CD14-positive monocyte (primary cell): ENCODE measurements at regions of chr16 and their contacts with region 1.

Region 1: GRCh38 chr16:106623-107324 is 28.7 kb downstream of the MPG start:
- DNase-seq: peak; percentile 42 to 59 (median 59)
- H3K4me3 ChIP-seq: no peak overlapping the region
- H3K4me3 Mint-ChIP-seq: no peak overlapping the region
- H3K27ac ChIP-seq: no peak overlapping the region
- H3K27ac Mint-ChIP-seq: peak overlapping the region in 1 of 7 donors; percentile 45
- H3K4me1 ChIP-seq: no peaks in the 10 kb centered on the region
- H3K4me1 Mint-ChIP-seq: no peaks in the 10 kb centered on the region
- H3K27me3 ChIP-seq: no peaks in the 10 kb centered on the region
- H3K27me3 Mint-ChIP-seq: peaks cover 0 to 5% (median 0%) of the 10 kb centered on the region in 3 donors
- CTCF ChIP-seq: peak; percentile 84

Region 2: DNA sequence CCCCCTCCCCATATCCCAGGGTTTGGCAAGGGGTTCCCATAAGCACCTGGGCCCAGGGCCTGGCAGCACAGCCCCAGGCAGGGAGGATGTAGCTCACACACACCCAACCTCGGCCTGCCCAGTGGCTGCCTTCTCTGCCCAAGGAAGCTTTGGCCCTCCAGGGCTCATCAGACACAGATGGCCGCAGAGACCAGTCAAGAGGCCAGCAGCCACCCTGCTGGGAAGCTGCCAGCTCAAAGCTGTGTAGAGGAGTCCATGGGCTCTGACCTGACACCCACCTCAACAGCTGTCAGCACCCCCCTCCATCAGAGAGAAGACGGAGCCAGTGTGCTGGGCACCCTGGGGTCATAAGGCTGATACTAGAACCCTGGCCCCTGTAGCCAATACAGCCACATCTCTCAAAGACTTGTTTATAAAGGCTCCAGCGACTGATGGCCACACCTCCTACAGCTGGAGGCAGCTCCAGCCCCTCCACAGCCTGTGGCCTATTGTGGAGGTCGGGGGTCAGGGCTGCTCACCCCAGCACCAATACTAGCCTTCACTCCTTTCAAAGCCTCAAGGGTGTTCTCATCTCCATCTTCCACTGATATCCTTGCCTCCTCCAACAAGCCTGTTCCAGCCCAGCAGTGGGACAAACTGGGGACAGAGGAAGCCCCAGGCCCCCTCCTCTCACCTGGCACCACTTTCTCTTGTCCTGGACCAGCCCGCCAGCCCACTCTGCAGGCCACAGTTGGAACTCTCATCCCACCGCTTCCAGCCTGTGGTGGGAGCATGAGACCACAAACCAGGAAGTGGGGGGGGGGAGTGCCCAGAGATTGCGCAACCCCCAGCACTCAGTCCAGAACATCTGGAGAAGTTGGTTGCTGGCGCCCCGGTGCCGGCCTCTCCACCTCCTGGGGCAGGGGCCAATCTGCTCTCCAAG is 30.9 kb before region 1 on chr16:
- intact Hi-C with region 1: no loop called
- DNase-seq: peak; percentile 46 to 74 (median 71)
- H3K4me3 ChIP-seq: peak overlapping the region in 1 of 3 experiments; percentile 87
- H3K4me3 Mint-ChIP-seq: peak overlapping the region; percentile 49 to 85
- H3K27ac ChIP-seq: no peak overlapping the region
- H3K27ac Mint-ChIP-seq: peak overlapping the region in 3 of 7 donors; percentile 50 to 83 (median 69)
- H3K4me1 ChIP-seq: peaks cover 32 to 40% of the 10 kb centered on the region in 2 donors
- H3K4me1 Mint-ChIP-seq: peaks cover 42% of the 10 kb centered on the region
- H3K27me3 ChIP-seq: peaks cover 13 to 41% of the 10 kb centered on the region in 2 donors
- H3K27me3 Mint-ChIP-seq: peaks cover 37 to 50% (median 39%) of the 10 kb centered on the region in 3 donors
- CTCF ChIP-seq: no peak

Region 3: GRCh38 chr16:164827-165538 is 58.2 kb after region 1 on chr16:
- intact Hi-C with region 1: no loop called
- DNase-seq: no peak
- H3K4me3 ChIP-seq: peak overlapping the region in 1 of 3 experiments; percentile 51
- H3K4me3 Mint-ChIP-seq: peak overlapping the region; percentile 54 to 71
- H3K27ac ChIP-seq: no peak overlapping the region
- H3K27ac Mint-ChIP-seq: peak overlapping the region in 1 of 7 donors; percentile 11
- H3K4me1 ChIP-seq: peaks cover 8 to 16% of the 10 kb centered on the region in 2 donors
- H3K4me1 Mint-ChIP-seq: peaks cover 10% of the 10 kb centered on the region
- H3K27me3 ChIP-seq: peaks cover 33 to 59% of the 10 kb centered on the region in 2 donors
- H3K27me3 Mint-ChIP-seq: peaks cover 61 to 78% (median 69%) of the 10 kb centered on the region in 3 donors
- CTCF ChIP-seq: no peak

Region 4: DNA sequence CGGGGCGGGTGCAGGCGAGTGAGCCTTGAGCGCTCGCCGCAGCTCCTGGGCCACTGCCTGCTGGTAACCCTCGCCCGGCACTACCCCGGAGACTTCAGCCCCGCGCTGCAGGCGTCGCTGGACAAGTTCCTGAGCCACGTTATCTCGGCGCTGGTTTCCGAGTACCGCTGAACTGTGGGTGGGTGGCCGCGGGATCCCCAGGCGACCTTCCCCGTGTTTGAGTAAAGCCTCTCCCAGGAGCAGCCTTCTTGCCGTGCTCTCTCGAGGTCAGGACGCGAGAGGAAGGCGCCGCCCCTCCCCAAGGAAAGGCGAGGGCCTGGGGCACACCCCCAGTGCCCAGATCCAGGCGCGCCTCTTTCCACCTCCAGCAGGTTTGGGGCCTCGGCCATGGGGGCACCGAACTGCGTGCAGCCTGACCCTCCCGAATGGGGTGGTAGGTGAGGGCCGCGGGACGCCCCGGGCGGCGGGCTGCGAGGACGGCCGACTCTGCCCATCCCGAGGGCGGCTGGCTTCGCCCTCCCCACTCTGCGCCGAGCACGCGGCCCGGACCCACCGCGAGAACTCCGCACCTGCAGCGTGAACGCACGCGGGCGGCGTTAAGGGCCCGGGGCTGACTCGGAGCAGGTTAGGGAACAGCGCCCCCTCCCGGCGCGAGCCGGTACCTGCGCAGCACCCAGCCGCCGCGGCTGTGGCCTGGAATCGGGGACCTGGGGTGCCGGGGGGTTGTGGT is 74.3 kb after region 1 on chr16:
- intact Hi-C with region 1: loop called (anchors 1 kb)
- DNase-seq: peak; percentile 51 to 66 (median 59)
- H3K4me3 ChIP-seq: peak overlapping the region in 1 of 3 experiments; percentile 50
- H3K4me3 Mint-ChIP-seq: peak overlapping the region in 1 of 2 donors; percentile 63
- H3K27ac ChIP-seq: no peak overlapping the region
- H3K27ac Mint-ChIP-seq: no peak overlapping the region
- H3K4me1 ChIP-seq: peaks cover 8 to 17% of the 10 kb centered on the region in 2 donors
- H3K4me1 Mint-ChIP-seq: peaks cover 6% of the 10 kb centered on the region
- H3K27me3 ChIP-seq: peaks cover 29 to 45% of the 10 kb centered on the region in 2 donors
- H3K27me3 Mint-ChIP-seq: peaks cover 34 to 51% (median 41%) of the 10 kb centered on the region in 3 donors
- CTCF ChIP-seq: peak; percentile 99

Region 5: GRCh38 chr16:212999-213398 is 106.2 kb after region 1 on chr16:
- intact Hi-C with region 1: no loop called
- DNase-seq: no peak
- H3K4me3 ChIP-seq: no peak overlapping the region
- H3K4me3 Mint-ChIP-seq: no peak overlapping the region
- H3K27ac ChIP-seq: no peak overlapping the region
- H3K27ac Mint-ChIP-seq: peak overlapping the region in 2 of 7 donors; percentile 18 to 42
- H3K4me1 ChIP-seq: no peaks in the 10 kb centered on the region
- H3K4me1 Mint-ChIP-seq: no peaks in the 10 kb centered on the region
- H3K27me3 ChIP-seq: no peaks in the 10 kb centered on the region
- H3K27me3 Mint-ChIP-seq: peaks cover 0 to 1% (median 0%) of the 10 kb centered on the region in 3 donors
- CTCF ChIP-seq: no peak

Region 6: DNA sequence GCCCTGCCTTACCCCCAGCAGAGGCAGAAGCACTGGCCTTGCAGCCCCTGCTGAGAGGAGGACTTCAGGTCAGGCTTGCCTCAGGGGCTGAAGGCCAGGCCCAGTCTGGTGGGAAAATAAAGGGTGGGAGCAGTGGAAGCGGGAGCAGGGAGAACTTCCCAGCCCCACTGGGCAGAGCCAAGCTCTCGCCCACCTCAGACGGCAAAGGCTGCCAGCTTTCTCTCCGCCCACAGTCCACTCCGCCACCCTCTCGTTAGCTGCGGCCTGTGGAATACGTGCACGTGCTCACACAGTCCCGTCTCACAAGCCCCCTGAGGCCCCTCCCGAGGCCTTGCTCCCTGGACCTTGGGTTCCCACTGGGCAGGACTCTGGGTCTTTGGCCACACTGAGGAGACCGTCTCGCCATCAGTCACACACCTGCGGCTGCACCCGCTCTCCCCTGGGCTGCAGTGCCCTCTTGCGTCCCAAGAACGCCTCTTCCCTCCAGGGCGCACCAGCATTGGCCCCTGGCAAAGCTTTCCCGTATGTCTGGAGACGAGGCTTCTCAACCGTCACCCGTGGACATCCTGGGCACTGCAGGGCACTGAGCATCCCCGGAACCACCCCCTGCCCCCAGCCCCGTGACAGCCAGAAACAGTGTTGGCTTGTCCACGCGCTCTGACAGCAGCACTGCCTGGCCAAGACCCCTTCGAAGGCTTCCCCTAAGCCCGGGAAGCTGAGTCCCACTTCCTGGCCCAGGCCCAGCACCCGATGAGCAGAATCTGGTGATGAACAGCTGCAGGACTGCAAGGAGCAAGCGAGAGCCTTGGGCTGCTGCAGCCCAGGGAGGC is 255.3 kb after region 1 on chr16:
- intact Hi-C with region 1: loop called (anchors 5 kb)
- DNase-seq: peak; percentile 57 to 71 (median 70)
- H3K4me3 ChIP-seq: no peak overlapping the region
- H3K4me3 Mint-ChIP-seq: no peak overlapping the region
- H3K27ac ChIP-seq: no peak overlapping the region
- H3K27ac Mint-ChIP-seq: peak overlapping the region in 2 of 7 donors; percentile 30 to 73
- H3K4me1 ChIP-seq: peaks cover 6 to 8% of the 10 kb centered on the region in 2 donors
- H3K4me1 Mint-ChIP-seq: peaks cover 6% of the 10 kb centered on the region
- H3K27me3 ChIP-seq: no peaks in the 10 kb centered on the region
- H3K27me3 Mint-ChIP-seq: peaks cover 5 to 25% (median 11%) of the 10 kb centered on the region in 3 donors
- CTCF ChIP-seq: peak; percentile 82